Ascending aorta (tissue), 2 donors: ENCODE measurements at regions of chr17 and their contacts with region 1.

Region 1: DNA sequence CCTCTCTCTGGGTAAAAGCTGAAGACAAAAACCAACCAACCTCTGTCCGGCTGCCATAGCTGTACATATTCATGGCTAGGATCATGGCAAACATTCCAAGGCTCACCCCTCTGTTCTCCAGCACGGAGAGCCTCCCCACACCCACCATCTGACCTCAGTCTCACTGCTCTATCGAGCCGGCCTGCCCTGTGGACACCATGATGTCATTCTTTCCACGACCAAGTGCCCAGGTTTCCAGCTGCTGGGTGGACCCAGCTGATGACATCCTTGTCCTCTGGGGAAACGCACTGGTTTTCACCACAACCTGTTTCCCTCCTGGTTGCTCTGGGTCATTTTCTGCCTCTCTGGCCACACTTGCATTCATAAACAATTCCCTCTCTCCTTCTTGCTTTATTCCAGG is 67.7 kb downstream of the NDEL1 start:
- DNase-seq: peak in 1 of 2 donors; percentile 84
- H3K4me3 ChIP-seq: no peak overlapping the region
- H3K27ac ChIP-seq: peak overlapping the region; percentile 69 to 78
- H3K4me1 ChIP-seq: peaks cover 0 to 12% of the 10 kb centered on the region in 2 donors
- H3K27me3 ChIP-seq: no peaks in the 10 kb centered on the region
- CTCF ChIP-seq: no peak

Region 2: GRCh38 chr17:8572764-8573163 is 69.4 kb after region 1 on chr17:
- intact Hi-C with region 1: loop called (anchors 5 kb)
- DNase-seq: no peak
- H3K4me3 ChIP-seq: no peak overlapping the region
- H3K27ac ChIP-seq: peak overlapping the region; percentile 54 to 64
- H3K4me1 ChIP-seq: peaks cover 4 to 20% of the 10 kb centered on the region in 2 donors
- H3K27me3 ChIP-seq: no peaks in the 10 kb centered on the region
- CTCF ChIP-seq: no peak

Region 3: DNA sequence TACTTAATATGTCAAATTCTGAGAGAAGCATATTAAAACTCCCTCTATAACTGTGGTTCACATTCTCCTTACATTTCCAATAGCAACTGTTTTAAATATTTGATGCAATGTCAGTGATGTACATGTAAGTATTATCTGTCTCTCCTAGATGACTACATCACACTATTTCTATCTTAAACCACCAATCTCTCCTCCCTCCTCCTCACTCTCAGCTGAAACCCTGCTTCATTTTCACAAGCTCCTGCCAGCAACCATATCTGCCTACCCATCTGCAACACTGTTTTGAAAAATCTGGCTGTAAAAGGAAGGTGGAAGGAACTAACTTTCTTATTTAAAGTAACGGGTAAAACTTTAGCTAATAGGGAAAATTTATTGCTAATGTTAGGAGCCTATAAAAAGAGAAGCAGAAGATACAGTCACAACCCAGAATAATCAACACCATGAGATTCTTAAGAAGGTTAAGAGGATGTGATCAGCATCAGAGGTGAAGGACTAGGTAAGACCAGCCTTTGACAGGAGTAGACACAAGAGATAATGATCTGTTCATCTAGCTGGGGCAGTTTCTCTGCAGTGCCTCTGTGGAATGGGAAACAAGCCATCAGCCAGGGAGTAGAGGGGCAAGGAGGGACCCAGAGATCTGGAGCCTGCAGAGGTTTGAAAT is 96.1 kb after region 1 on chr17:
- intact Hi-C with region 1: no loop called
- DNase-seq: no peak
- H3K4me3 ChIP-seq: peak overlapping the region in 1 of 2 donors; percentile 17
- H3K27ac ChIP-seq: peak overlapping the region; percentile 40 to 68
- H3K4me1 ChIP-seq: peaks cover 0 to 52% of the 10 kb centered on the region in 2 donors
- H3K27me3 ChIP-seq: no peaks in the 10 kb centered on the region
- CTCF ChIP-seq: no peak